ENCODE measurements at regions of chr1 and their contacts with region 1.

Region 1: DNA sequence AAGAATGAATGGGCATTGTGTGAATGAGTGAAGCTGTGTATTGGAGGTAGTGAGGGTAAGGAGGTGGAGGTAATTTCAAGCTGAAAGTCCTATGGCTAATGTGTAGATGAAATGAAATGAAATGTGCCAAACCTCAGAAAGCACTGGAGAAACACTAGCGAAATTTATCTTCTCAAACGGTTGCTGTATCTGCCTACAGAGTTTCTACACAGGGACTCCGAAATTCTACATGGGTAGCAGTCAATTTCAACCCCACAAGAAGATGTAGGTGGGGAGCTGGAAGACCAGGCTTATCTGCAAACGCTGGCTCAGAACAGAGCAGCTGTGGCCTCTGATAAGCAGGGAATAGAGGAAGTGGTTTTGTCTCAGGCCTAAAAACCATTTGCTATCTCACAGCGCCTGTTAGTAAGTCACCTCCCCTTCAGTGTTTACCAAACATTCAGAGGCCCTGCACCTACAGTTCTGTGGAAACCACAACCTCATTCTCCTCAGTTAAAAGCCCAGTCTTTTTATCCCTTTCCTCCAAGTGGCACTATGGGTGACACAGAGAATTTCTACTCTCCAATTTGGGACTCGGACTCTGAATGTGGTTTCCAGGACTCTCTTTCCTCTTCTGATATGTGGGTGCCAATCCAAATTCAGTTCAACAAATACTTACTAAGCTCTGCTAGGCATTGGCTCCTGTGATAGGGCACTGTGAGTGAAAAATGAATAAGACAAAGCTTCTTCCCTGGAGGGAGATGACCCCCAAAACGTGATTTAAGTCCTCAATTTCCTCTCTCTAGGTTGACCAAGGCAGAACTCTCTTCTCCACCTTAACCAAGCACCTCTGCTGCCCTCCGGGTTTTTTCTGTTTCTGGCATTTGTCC is 17.2 kb upstream of the SLAMF6 start:
- DNase-seq: peak; percentile 76
- ATAC-seq: peak; percentile 95
- H3K4me3 Mint-ChIP-seq: peak overlapping the region; percentile 58
- H3K27ac Mint-ChIP-seq: peak overlapping the region; percentile 89
- H3K4me1 Mint-ChIP-seq: peaks cover 54% of the 10 kb centered on the region
- H3K27me3 Mint-ChIP-seq: no peaks in the 10 kb centered on the region

Region 2: GRCh38 chr1:160428655-160429054 is 111.6 kb before region 1 on chr1:
- CTCF ChIA-PET with region 1: interaction called, 19 read pairs
- POLR2A ChIA-PET with region 1: no interaction called
- DNase-seq: peak; percentile 49
- ATAC-seq: peak; percentile 71
- H3K4me3 Mint-ChIP-seq: peak overlapping the region; percentile 32
- H3K27ac Mint-ChIP-seq: peak overlapping the region; percentile 82
- H3K4me1 Mint-ChIP-seq: peaks cover 55% of the 10 kb centered on the region
- H3K27me3 Mint-ChIP-seq: no peaks in the 10 kb centered on the region

Region 3: DNA sequence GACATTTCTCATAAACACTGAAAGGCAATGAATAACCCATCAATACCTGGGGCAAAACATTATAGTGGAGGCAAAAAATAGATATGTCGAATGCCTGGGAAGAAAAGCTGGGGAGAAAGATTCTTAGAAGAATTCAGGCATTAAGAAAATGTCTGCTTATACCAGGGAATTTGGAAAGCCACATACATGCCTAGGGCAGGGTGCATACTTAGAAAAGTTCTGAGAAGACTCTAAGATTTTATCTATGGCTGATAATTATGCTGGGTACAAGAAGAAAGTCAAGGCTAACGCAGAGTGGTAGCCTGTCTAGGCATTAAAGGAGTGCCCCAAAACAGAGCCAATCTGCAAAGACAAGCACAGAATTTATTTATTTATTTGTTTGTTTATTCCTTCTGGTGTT is 35.6 kb before region 1 on chr1:
- CTCF ChIA-PET with region 1: no interaction called
- POLR2A ChIA-PET with region 1: no interaction called
- DNase-seq: no peak
- ATAC-seq: no peak
- H3K4me3 Mint-ChIP-seq: no peak overlapping the region
- H3K27ac Mint-ChIP-seq: no peak overlapping the region
- H3K4me1 Mint-ChIP-seq: peaks cover 3% of the 10 kb centered on the region
- H3K27me3 Mint-ChIP-seq: no peaks in the 10 kb centered on the region

Region 4: GRCh38 chr1:160519642-160520435 is 20.4 kb before region 1 on chr1:
- CTCF ChIA-PET with region 1: interaction called, 24 read pairs
- POLR2A ChIA-PET with region 1: interaction called, 17 read pairs
- DNase-seq: peak; percentile 48
- ATAC-seq: peak; percentile 65
- H3K4me3 Mint-ChIP-seq: peak overlapping the region; percentile 83
- H3K27ac Mint-ChIP-seq: peak overlapping the region; percentile 93
- H3K4me1 Mint-ChIP-seq: peaks cover 90% of the 10 kb centered on the region
- H3K27me3 Mint-ChIP-seq: no peaks in the 10 kb centered on the region

Region 5: GRCh38 chr1:160550572-160551034 is 10.4 kb after region 1 on chr1:
- CTCF ChIA-PET with region 1: interaction called, 32 read pairs
- POLR2A ChIA-PET with region 1: interaction called, 3 read pairs
- DNase-seq: peak; percentile 57
- ATAC-seq: peak; percentile 53
- H3K4me3 Mint-ChIP-seq: no peak overlapping the region
- H3K27ac Mint-ChIP-seq: no peak overlapping the region
- H3K4me1 Mint-ChIP-seq: no peaks in the 10 kb centered on the region
- H3K27me3 Mint-ChIP-seq: no peaks in the 10 kb centered on the region

Region 6: DNA sequence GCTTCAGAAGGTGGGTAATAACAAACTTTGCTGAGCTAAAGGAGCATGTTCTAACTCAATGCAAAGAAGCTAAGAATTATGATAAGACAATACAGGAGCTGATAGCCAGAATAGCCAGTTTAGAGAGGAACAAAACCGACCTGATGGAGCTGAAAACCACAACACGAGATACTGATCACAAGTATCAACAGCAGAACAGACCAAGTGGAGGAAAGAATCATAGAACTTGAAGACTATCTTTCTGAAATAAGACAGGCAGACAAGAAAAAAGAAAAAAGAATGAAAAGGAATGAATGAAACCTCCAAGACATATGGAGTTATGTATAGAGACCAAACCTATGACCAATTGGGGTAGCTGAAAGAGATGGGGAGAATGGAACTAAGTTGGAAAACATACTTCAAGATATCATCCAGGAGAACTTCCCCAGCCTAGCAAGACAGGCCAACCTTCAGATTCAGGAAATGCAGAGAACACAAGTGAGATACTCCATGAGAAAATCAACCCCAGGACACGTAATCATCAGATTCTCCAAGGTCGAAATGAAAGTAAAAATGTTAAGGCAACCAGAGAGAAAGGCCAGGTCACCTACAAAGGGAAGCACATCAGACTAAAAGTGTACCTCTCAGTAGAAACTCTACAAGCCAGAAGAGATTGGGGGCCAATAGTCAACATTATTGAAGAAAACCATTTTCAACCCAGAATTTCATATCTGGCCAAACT is 18.6 kb after region 1 on chr1:
- CTCF ChIA-PET with region 1: interaction called, 32 read pairs
- POLR2A ChIA-PET with region 1: no interaction called
- DNase-seq: no peak
- ATAC-seq: peak; percentile 27
- H3K4me3 Mint-ChIP-seq: peak overlapping the region; percentile 51
- H3K27ac Mint-ChIP-seq: peak overlapping the region; percentile 53
- H3K4me1 Mint-ChIP-seq: peaks cover 42% of the 10 kb centered on the region
- H3K27me3 Mint-ChIP-seq: no peaks in the 10 kb centered on the region

Region 7: GRCh38 chr1:160575112-160575664 is 35.0 kb after region 1 on chr1:
- CTCF ChIA-PET with region 1: interaction called, 15 read pairs
- POLR2A ChIA-PET with region 1: no interaction called
- DNase-seq: no peak
- ATAC-seq: peak; percentile 14
- H3K4me3 Mint-ChIP-seq: peak overlapping the region; percentile 28
- H3K27ac Mint-ChIP-seq: peak overlapping the region; percentile 87
- H3K4me1 Mint-ChIP-seq: peaks cover 75% of the 10 kb centered on the region
- H3K27me3 Mint-ChIP-seq: no peaks in the 10 kb centered on the region

Measured in activated CD8-positive, alpha-beta T cell treated with anti-CD3 and anti-CD28 coated beads, Interleukin-2, amount 10 ng/mL, durations not matched to agents 7 days and 5 days (primary cell).